MCF 10A (cell line): ENCODE measurements at regions of chr20 and their contacts with region 1.

Region 1: DNA sequence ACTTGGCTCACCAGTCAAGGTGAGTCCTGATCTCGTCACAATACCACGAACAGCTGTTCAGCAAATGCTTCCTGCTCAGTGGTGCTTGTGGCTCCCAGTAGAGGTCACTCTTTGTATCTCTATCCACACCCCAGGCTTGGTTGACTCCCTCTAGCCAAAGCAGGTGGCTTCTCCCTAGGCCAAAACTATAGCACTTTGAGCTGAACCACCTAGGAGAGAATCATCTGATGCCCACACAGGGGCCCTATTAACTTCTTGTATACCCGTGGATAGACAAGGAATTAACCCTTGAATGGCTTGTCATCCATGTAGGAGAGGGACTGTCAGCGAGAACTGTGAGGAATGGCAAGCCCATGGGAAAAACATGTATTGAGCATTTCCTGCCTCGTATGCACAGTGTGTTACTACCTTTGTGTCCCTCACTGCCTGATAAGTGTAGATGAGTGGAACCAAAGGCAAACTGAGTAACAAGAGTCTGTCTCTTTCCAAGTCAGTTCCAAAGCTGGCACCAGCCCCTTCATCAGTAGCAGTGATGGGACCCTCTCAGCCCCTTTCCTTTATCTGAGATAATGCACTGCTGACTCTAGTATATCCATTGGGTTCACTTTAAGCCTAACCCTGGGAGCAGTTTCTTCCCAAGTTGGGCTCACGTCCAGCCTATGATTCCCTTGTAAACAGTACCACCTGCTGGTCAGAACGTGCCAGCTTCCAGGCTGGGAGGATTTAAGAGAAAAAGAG is 42.5 kb downstream of the EIF2S2 start:
- DNase-seq: peak; percentile 85
- H3K4me3 Mint-ChIP-seq: no peak overlapping the region
- H3K27ac Mint-ChIP-seq: no peak overlapping the region
- H3K4me1 Mint-ChIP-seq: peaks cover 21% of the 10 kb centered on the region
- H3K27me3 Mint-ChIP-seq: no peaks in the 10 kb centered on the region
- CTCF ChIP-seq: peak; percentile 88

Region 2: DNA sequence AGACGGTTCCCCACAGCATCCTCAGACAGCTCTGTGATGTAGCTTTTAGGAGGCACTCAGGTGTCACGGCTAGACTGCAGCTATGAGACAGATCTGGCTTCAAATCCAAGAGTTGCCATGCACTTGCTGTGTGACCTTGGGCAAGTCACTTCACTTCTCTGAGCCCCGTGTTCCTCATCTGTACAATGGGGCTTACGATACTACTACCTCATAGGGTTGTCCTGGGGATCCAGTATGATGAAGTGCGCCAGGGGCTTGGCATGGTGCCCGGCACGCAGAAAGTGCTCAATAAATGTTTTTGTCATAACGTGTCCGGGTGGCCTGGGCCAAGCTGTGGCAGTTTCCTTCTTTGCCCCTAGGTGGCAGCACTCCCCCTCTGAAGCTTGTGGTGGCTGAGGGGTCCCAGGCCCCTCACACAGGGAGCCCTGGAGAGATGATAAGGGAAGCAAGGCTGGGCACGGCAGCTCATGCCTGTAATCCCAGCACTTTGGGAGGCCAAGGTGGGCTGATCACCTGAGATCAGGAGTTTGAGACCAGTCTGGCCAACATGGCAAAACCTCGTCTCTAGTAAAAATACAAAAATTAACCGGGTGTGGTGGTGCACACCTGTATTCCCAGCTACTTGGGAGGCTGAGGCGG is 277.4 kb before region 1 on chr20:
- CTCF ChIA-PET with region 1: interaction called, 13 read pairs
- POLR2A ChIA-PET with region 1: interaction called, 3 read pairs
- intact Hi-C with region 1: loop called (anchors 5 kb)
- DNase-seq: peak; percentile 48
- H3K4me3 Mint-ChIP-seq: no peak overlapping the region
- H3K27ac Mint-ChIP-seq: no peak overlapping the region
- H3K4me1 Mint-ChIP-seq: peaks cover 24% of the 10 kb centered on the region
- H3K27me3 Mint-ChIP-seq: no peaks in the 10 kb centered on the region
- CTCF ChIP-seq: peak; percentile 87

Region 3: DNA sequence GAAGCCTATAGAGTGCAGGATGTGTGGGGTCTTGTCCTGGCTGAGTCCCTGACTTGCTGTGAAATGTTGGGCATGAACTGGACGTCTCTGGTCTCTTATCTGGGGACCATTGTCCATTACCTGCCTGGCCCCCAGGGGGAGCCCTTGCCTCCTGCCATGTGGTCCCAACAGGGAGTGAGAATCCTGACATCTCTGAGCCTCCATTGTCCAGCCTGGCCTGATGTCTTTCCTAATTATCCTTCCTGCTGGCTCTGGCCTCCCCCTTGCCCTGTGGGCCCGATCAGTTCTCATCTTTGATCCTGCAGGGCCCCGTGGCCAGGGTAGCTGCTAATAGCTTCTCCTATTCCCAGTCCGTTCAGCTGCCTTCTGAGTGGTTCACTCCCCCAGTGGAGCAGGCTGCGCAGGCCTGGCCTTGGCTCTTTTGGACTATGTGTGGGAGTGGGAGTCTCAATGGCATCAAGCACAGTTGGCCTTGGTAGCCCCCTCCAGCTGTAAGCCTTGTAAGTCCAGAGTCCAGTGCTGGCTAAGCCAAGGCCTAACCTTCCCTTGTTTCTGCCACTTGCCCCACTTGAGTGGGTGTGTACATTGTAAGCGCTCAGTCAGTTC is 153.7 kb before region 1 on chr20:
- CTCF ChIA-PET with region 1: interaction called, 3 read pairs
- POLR2A ChIA-PET with region 1: no interaction called
- intact Hi-C with region 1: loop called (anchors 5 kb)
- DNase-seq: peak; percentile 47
- H3K4me3 Mint-ChIP-seq: no peak overlapping the region
- H3K27ac Mint-ChIP-seq: no peak overlapping the region
- H3K4me1 Mint-ChIP-seq: no peaks in the 10 kb centered on the region
- H3K27me3 Mint-ChIP-seq: peaks cover 32% of the 10 kb centered on the region
- CTCF ChIP-seq: peak; percentile 50

Region 4: DNA sequence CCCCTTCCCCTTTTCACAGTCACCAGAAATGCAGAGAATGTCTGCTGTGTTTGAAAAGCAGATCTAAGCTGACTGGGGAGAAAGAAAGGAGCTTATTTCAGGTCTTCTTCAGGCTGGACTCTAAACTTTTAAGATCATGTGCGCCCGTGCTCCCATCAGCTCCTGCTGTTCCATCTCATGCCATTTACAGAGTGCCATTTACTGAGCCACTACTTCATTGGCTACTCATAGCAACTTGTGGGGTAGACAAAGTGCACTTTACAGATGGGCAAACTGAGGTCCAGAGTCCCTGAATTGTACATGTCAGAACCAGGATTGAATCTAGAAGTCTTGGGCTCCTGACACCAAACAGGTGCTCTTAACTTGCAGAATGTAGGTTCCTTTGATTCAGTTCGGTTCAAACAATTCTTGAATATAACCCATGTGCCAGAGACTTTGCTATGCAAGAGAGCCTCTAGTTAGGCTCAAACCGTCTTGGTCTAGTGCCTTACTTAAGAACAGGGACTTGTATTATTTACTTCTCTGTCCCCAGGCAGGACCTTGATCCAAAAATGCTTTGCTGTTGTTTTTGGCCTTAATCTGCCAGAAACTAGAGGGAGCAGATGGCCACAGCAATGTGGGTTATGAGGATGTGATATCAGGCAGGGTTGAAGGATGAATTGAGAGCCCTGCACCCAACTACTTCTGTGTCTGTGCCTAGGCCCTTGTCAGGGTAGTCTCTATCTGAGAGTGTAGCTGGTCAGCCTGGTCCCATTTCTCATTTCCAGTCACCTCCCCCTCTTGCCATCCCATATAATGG is 19.4 kb before region 1 on chr20:
- CTCF ChIA-PET with region 1: interaction called, 12 read pairs
- POLR2A ChIA-PET with region 1: interaction called, 3 read pairs
- intact Hi-C with region 1: no loop called
- DNase-seq: no peak
- H3K4me3 Mint-ChIP-seq: no peak overlapping the region
- H3K27ac Mint-ChIP-seq: no peak overlapping the region
- H3K4me1 Mint-ChIP-seq: peaks cover 5% of the 10 kb centered on the region
- H3K27me3 Mint-ChIP-seq: no peaks in the 10 kb centered on the region
- CTCF ChIP-seq: no peak

Region 5: DNA sequence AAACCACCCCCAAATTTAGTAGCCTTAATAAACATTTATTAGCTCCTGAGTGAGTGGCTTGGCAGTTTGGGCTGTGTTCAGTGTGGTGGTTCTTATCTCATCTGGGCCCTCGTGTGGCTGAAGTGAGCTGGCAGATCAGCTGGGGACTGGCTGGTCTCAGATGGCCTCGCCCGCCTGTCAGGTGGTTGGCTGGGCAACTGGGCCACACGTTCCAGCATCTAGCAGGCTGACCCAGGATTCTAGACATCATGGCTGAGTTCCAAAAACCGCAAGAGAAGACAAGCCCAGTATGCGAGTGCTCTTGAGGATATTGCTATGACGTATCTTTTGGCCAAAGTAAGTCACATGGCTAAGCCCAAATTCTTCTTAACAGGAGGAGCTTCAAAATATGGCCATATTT is 13.6 kb after region 1 on chr20:
- CTCF ChIA-PET with region 1: interaction called, 36 read pairs
- POLR2A ChIA-PET with region 1: interaction called, 7 read pairs
- intact Hi-C with region 1: no loop called
- DNase-seq: peak; percentile 96
- H3K4me3 Mint-ChIP-seq: no peak overlapping the region
- H3K27ac Mint-ChIP-seq: peak overlapping the region; percentile 82
- H3K4me1 Mint-ChIP-seq: peaks cover 24% of the 10 kb centered on the region
- H3K27me3 Mint-ChIP-seq: no peaks in the 10 kb centered on the region
- CTCF ChIP-seq: no peak